Colonic mucosa (tissue), 4 donors: ENCODE measurements at regions of chr4 and their contacts with region 1.

Region 1: DNA sequence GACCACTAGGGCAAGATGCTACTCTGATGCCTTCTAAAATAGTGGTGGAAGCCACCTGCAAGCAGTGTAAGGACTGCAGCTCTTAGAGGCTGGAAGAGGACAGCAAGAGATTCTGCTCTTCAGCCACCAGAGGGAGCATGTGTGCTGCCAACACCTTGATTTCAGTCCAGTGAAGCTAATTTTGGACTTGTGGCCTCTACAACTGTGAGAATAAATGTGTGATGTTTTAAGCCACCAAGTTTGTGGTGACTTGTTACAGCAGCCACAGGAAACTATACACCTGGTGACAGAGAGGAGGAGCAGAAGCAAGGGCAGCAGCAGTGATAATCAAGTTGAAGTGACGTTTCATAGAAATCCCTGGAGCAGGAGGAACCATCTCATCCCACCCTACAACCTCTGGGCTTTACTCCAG is 55.9 kb downstream of the FGFBP1 start:
- DNase-seq: peak; percentile 58
- H3K4me3 ChIP-seq: no peak overlapping the region
- H3K27ac ChIP-seq: no peak overlapping the region
- H3K4me1 ChIP-seq: no peaks in the 10 kb centered on the region
- H3K27me3 ChIP-seq: no peaks in the 10 kb centered on the region
- CTCF ChIP-seq: peak; percentile 93

Region 2: GRCh38 chr4:15805583-15806517 is 76.8 kb before region 1 on chr4:
- intact Hi-C with region 1: loop called (anchors 5 kb)
- DNase-seq: peak; percentile 51
- H3K4me3 ChIP-seq: no peak overlapping the region
- H3K27ac ChIP-seq: no peak overlapping the region
- H3K4me1 ChIP-seq: no peaks in the 10 kb centered on the region
- H3K27me3 ChIP-seq: no peaks in the 10 kb centered on the region
- CTCF ChIP-seq: peak; percentile 55

Region 3: GRCh38 chr4:15976456-15977447 is 94.1 kb after region 1 on chr4:
- intact Hi-C with region 1: no loop called
- DNase-seq: no peak
- H3K4me3 ChIP-seq: no peak overlapping the region
- H3K27ac ChIP-seq: no peak overlapping the region
- H3K4me1 ChIP-seq: no peaks in the 10 kb centered on the region
- H3K27me3 ChIP-seq: no peaks in the 10 kb centered on the region
- CTCF ChIP-seq: no peak

Region 4: GRCh38 chr4:15992167-15992485 is 109.4 kb after region 1 on chr4:
- intact Hi-C with region 1: no loop called
- DNase-seq: no peak
- H3K4me3 ChIP-seq: no peak overlapping the region
- H3K27ac ChIP-seq: no peak overlapping the region
- H3K4me1 ChIP-seq: peaks cover 3% of the 10 kb centered on the region
- H3K27me3 ChIP-seq: no peaks in the 10 kb centered on the region
- CTCF ChIP-seq: no peak